Activated B cell treated with CpG ODN at 0.5 μM for 24 hours (primary cell): ENCODE measurements at regions of chr13 and their contacts with region 1.

Region 1: GRCh38 chr13:30408319-30409101 is 13.8 kb upstream of the UBE2L5 start:
- DNase-seq: peak; percentile 85
- ATAC-seq: peak; percentile 94
- H3K4me3 Mint-ChIP-seq: peak overlapping the region; percentile 62
- H3K27ac Mint-ChIP-seq: peak overlapping the region; percentile 79
- H3K4me1 Mint-ChIP-seq: peaks cover 53% of the 10 kb centered on the region
- H3K27me3 Mint-ChIP-seq: no peaks in the 10 kb centered on the region
- CTCF ChIP-seq: no peak

Region 2: DNA sequence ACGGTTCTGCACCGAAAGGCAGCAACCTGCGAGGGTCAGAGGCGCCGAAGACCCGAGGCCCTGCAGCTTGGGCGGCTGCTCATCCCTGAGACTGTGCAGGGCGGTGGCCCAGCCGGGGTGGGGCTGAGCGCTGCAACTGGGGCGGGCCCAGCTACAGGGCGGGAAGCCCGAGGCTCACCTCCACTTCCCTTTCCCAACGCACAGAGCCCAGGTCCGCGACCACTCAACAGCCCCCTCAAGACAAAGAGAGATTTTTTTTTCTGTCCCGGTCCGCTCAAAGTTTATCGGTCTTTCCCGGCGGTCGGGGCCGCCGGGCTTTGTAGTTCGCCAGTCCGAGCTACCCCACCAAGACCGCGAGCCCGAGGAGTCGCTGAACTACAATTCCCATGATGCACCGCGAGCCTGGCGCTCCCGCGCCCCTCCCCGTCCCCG is 101.7 kb before region 1 on chr13:
- CTCF ChIA-PET with region 1: interaction called, 5 read pairs
- POLR2A ChIA-PET with region 1: no interaction called
- intact Hi-C with region 1: loop called (anchors 2 kb)
- DNase-seq: peak; percentile 86
- ATAC-seq: peak; percentile 86
- H3K4me3 Mint-ChIP-seq: peak overlapping the region; percentile 90
- H3K27ac Mint-ChIP-seq: peak overlapping the region; percentile 85
- H3K4me1 Mint-ChIP-seq: peaks cover 72% of the 10 kb centered on the region
- H3K27me3 Mint-ChIP-seq: no peaks in the 10 kb centered on the region
- CTCF ChIP-seq: no peak

Region 3: GRCh38 chr13:30395192-30396084 is 13.1 kb before region 1 on chr13:
- CTCF ChIA-PET with region 1: interaction called, 10 read pairs
- POLR2A ChIA-PET with region 1: interaction called, 23 read pairs
- intact Hi-C with region 1: loop called (anchors 1 kb)
- DNase-seq: peak; percentile 52
- ATAC-seq: peak; percentile 78
- H3K4me3 Mint-ChIP-seq: peak overlapping the region; percentile 97
- H3K27ac Mint-ChIP-seq: peak overlapping the region; percentile 91
- H3K4me1 Mint-ChIP-seq: peaks cover 29% of the 10 kb centered on the region
- H3K27me3 Mint-ChIP-seq: no peaks in the 10 kb centered on the region
- CTCF ChIP-seq: no peak

Region 4: DNA sequence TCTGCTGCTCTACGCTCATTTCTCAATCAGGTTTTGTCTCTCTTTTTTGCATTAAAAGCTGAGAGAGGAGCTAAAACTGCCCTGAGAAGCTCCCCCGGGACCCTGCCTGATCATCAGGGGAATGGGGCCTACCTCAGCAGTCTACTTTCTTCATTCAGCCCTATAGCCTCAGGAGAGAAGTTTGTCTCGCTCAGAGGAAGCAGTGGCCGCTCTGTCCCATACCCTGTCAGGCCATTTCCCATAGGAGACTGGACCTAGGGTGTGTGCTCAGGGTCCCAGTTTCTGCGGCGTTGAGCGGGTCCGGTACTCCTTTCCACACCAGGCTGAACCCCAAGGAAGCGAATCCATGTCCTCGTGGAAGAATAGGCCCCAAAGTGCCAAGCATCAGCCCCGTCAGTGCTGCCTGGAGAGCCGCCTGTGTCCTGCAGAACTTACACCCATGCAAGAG is 35.5 kb after region 1 on chr13:
- CTCF ChIA-PET with region 1: interaction called, 6 read pairs
- POLR2A ChIA-PET with region 1: interaction called, 10 read pairs
- intact Hi-C with region 1: loop called (anchors 1 kb)
- DNase-seq: peak; percentile 76
- ATAC-seq: peak; percentile 88
- H3K4me3 Mint-ChIP-seq: peak overlapping the region; percentile 79
- H3K27ac Mint-ChIP-seq: peak overlapping the region; percentile 97
- H3K4me1 Mint-ChIP-seq: peaks cover 72% of the 10 kb centered on the region
- H3K27me3 Mint-ChIP-seq: no peaks in the 10 kb centered on the region
- CTCF ChIP-seq: no peak

Region 5: DNA sequence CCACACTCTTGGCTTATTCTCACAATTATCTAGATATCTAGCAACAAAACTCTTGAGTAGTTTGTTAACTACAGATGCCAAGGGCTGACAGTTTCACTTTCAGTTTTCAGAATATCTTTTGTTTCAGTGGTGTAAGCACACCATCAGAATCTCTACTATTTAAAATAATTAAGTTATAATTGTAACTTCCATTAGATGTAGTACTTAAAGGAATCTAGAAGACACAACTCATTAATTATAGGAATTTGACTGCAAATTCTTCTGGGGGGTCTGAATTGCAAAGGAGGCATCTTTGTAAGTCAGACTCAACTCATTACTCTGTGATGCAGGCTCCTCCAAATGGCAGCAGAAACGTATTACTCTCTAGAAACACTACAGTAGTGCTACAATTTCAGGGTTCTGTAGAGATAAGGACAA is 164.4 kb after region 1 on chr13:
- CTCF ChIA-PET with region 1: no interaction called
- POLR2A ChIA-PET with region 1: no interaction called
- intact Hi-C with region 1: loop called (anchors 1 kb)
- DNase-seq: no peak
- ATAC-seq: peak; percentile 83
- H3K4me3 Mint-ChIP-seq: peak overlapping the region; percentile 64
- H3K27ac Mint-ChIP-seq: peak overlapping the region; percentile 71
- H3K4me1 Mint-ChIP-seq: peaks cover 23% of the 10 kb centered on the region
- H3K27me3 Mint-ChIP-seq: no peaks in the 10 kb centered on the region
- CTCF ChIP-seq: no peak